ENCODE measurements at regions of chr2 and their contacts with region 1.

Region 1: GRCh38 chr2:26959331-26959730 is 11.1 kb upstream of the MAPRE3 start:
- DNase-seq: peak in 2 of 3 donors; percentile 26 to 32
- H3K4me3 ChIP-seq: no peak overlapping the region
- H3K27ac ChIP-seq: no peak overlapping the region
- H3K4me1 ChIP-seq: peaks cover 0 to 7% (median 6%) of the 10 kb centered on the region in 4 experiments
- H3K27me3 ChIP-seq: peaks cover 0 to 8% (median 0%) of the 10 kb centered on the region in 5 experiments

Region 2: DNA sequence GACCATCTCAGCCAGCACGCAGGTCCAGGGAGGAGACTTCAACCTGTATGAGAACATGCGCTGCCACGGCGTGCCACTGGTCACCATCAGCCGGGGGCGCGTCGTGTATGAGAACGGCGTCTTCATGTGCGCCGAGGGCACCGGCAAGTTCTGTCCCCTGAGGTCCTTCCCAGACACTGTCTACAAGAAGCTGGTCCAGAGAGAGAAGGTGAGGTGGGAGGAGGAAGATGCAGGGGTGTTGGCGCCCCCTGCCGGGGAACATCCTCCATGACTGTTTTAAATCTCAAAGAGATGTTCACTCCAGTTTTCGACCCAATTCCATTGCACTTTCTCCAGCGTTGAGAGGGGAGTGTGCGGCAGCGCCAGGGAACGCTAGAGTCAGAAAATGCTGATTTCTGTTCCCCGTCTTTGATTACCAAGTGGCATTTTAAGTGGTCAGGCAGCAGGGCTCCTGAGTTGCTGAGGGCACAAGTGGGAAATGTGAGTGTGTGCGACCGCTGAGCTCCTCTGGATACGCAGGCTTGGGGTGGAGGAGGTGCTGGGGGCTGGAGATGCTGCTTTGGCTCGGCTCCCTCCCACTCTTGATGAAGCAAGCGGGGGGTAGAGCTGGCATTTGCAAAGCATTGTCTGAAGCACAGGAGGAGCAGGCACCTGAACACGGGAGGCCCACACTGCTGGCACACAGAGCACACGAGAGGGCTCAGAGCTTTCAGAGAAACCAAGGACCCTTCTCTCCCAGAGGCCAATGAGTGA is 16.6 kb before region 1 on chr2:
- CTCF ChIA-PET with region 1: interaction called, 15 read pairs
- POLR2A ChIA-PET with region 1: no interaction called
- DNase-seq: peak; percentile 54 to 79 (median 71)
- H3K4me3 ChIP-seq: no peak overlapping the region
- H3K27ac ChIP-seq: no peak overlapping the region
- H3K4me1 ChIP-seq: peaks cover 0 to 3% (median 0%) of the 10 kb centered on the region in 4 experiments
- H3K27me3 ChIP-seq: peaks cover 0 to 8% (median 3%) of the 10 kb centered on the region in 5 experiments

Region 3: GRCh38 chr2:26993768-26994167 is 34.4 kb after region 1 on chr2:
- CTCF ChIA-PET with region 1: interaction called, 10 read pairs
- POLR2A ChIA-PET with region 1: no interaction called
- DNase-seq: peak in 2 of 3 donors; percentile 44 to 46
- H3K4me3 ChIP-seq: no peak overlapping the region
- H3K27ac ChIP-seq: no peak overlapping the region
- H3K4me1 ChIP-seq: no peaks in the 10 kb centered on the region
- H3K27me3 ChIP-seq: peaks cover 0 to 4% (median 0%) of the 10 kb centered on the region in 5 experiments